ENCODE measurements at regions of chr5 and their contacts with region 1.

Region 1: DNA sequence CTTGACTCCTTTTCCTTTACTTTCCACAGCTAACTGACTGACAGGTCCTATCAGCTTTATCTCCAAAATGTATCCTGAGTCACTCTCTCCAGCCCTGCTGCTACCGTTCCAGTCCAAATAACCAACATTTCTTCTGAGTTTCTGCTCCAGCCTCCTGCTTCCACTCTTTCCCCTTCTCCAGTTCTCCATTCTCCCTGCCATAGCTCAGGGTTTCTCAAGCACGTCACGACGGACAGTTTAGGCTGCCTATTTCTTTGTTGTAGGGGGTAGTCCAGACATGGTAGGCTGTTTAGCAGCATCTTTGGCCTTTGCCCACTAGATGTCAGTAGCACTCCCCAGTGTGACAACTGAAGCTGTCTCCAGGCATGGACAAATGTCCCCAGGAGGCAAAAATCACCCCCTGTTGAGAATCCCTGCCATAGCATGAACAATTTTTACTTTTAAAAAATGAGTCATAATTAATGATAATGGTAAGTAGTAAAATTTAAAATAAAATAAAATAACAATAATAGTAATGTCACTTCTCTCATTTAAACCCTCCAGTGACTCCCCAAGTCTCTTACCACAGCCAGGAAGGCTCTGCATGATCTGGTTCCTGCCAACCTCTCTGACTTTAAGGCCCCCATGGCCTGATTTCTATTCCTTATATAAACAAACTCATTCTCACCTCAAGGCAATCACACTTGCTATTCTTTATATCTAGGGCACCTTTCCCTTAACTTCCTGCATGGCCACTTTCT is 105.4 kb upstream of the FER start:
- DNase-seq: peak; percentile 26
- H3K4me3 ChIP-seq: no peak overlapping the region
- H3K27ac ChIP-seq: no peak overlapping the region
- H3K27me3 ChIP-seq: no peaks in the 10 kb centered on the region
- CTCF ChIP-seq: peak; percentile 91

Region 2: GRCh38 chr5:108367679-108368334 is 274.5 kb before region 1 on chr5:
- CTCF ChIA-PET with region 1: no interaction called
- POLR2A ChIA-PET with region 1: no interaction called
- DNase-seq: no peak
- H3K4me3 ChIP-seq: no peak overlapping the region
- H3K27ac ChIP-seq: no peak overlapping the region
- H3K27me3 ChIP-seq: no peaks in the 10 kb centered on the region
- CTCF ChIP-seq: no peak

Region 3: GRCh38 chr5:108521841-108522506 is 120.4 kb before region 1 on chr5:
- CTCF ChIA-PET with region 1: interaction called, 30 read pairs
- POLR2A ChIA-PET with region 1: no interaction called
- DNase-seq: peak; percentile 45
- H3K4me3 ChIP-seq: no peak overlapping the region
- H3K27ac ChIP-seq: no peak overlapping the region
- H3K27me3 ChIP-seq: no peaks in the 10 kb centered on the region
- CTCF ChIP-seq: peak; percentile 77

Region 4: GRCh38 chr5:108655750-108656450 is 13.6 kb after region 1 on chr5:
- CTCF ChIA-PET with region 1: interaction called, 21 read pairs
- POLR2A ChIA-PET with region 1: no interaction called
- DNase-seq: peak; percentile 23
- H3K4me3 ChIP-seq: no peak overlapping the region
- H3K27ac ChIP-seq: no peak overlapping the region
- H3K27me3 ChIP-seq: no peaks in the 10 kb centered on the region
- CTCF ChIP-seq: 0 out of 2 replicates have a peak, but pooled peaks have one; percentile 10

Region 5: DNA sequence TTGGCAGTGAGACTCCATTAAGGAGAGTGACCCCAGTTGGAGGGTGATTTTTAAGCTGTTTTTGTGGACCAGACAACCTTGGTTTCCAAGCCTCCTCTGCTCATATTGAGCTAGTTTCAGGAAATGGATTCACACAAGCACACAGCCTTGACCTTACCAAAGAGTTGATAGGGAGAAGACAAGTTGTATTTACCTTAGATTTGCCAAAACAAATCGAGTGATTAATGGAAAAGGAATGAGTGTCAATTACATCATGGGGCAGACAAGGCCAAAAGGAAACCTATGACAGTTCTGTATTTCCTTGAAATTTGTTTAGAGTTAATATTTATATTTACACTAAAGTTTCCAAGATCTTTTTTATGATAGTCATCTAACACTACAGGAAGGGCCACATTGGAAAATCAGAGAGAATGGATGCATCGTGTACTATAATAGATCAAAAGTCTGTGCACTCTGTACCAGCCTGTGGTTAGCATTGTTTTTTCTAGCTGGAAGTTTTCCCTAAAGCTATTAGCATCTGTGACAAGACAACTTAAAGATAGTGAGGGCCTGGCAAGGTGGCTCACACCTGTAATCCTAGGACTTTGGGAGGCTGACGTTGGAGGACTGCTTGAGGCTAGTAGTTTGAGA is 19.4 kb after region 1 on chr5:
- CTCF ChIA-PET with region 1: interaction called, 15 read pairs
- POLR2A ChIA-PET with region 1: no interaction called
- DNase-seq: no peak
- H3K4me3 ChIP-seq: no peak overlapping the region
- H3K27ac ChIP-seq: no peak overlapping the region
- H3K27me3 ChIP-seq: no peaks in the 10 kb centered on the region
- CTCF ChIP-seq: no peak

Region 6: DNA sequence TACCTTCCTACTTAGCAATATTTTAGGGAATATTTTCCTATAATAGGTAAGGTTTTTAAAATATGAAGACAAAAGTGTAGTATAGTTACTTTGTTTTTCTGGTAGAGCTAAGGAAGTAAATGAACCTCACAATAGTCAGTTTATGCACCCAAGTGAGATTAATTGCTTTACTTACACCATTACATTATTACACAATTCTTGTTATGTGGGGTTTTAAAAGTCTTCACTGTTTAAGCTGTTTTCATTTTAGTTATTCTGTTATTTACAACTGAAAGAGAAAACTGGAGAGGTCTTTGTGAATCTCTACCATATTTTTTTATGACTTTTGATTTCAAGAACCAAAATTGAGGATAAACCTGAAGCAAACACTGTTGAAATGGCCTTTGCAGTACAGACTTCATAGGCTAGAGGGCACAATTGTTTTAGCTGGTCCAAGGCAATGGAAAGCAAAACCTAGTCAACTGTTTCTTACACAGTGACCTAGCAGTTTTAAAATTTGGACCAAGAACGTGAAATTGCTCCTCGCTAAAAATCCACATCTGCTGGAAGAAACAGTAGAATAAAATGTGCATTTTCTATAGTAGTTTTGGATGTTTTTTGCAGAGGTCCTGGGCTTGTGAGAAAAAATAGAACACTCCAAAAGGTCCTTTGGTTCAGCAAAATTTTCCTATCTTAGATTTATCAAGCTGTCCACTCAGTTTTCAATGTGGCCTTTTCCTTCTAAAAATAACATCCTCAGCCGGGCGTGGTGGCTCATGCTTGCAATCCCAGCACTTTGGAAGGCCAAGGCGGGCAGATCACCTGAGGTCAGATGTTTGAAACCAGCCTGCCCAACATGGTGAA is 39.0 kb after region 1 on chr5:
- CTCF ChIA-PET with region 1: interaction called, 11 read pairs
- POLR2A ChIA-PET with region 1: no interaction called
- DNase-seq: peak; percentile 46
- H3K4me3 ChIP-seq: no peak overlapping the region
- H3K27ac ChIP-seq: no peak overlapping the region
- H3K27me3 ChIP-seq: no peaks in the 10 kb centered on the region
- CTCF ChIP-seq: peak; percentile 91

Region 7: DNA sequence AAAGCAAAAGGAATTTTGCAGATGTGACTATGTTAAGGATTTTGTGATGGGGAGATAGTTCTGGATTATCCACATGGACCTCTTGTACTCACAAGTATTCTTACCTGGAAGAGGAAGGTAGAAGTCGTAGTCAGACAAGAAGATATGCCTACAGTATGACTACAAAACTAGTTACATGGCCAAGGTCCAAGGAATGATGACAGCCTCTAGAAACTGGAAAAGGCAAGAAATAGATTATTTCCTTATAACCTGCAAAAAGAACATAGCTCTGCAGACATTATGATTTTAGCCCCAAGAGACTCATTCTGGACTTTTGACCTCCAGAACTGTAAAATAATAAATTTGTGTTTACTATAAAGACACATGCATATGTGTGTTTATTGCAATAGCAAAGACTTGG is 332.3 kb after region 1 on chr5:
- CTCF ChIA-PET with region 1: no interaction called
- POLR2A ChIA-PET with region 1: no interaction called
- DNase-seq: no peak
- H3K4me3 ChIP-seq: no peak overlapping the region
- H3K27ac ChIP-seq: no peak overlapping the region
- H3K27me3 ChIP-seq: no peaks in the 10 kb centered on the region
- CTCF ChIP-seq: no peak

Region 8: DNA sequence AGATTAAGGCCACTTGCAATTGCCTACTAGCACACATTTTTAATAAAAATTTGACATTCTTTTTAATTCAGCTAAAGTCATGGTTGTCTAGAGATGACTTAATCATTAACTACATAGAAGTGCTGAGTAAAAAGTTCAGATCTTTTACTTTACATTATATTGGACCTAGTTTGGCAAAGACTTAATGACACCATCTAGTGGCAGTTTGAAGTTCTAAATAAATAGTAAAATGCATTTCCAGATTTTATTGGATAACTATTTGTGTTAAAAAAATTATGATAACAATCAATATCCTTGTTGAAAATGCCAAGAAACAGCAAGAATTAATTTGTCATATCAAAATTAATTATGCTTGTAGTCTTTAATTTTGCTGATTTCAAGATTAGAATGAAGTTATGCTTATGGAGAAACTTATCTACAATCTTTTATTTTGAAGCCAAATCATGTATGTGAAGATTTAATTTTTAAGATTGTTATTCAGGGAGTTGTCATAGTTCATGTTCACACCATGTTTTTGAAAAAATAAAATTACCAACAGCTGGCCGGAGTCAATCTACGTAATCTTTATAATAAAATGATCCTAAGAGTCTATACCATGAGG is 837.0 kb after region 1 on chr5:
- CTCF ChIA-PET with region 1: interaction called, 10 read pairs
- POLR2A ChIA-PET with region 1: no interaction called
- DNase-seq: no peak
- H3K4me3 ChIP-seq: no peak overlapping the region
- H3K27ac ChIP-seq: no peak overlapping the region
- H3K27me3 ChIP-seq: no peaks in the 10 kb centered on the region
- CTCF ChIP-seq: peak; percentile 53

Measured in AG04450 (cell line).